HepG2 (cell line): ENCODE measurements at regions of chr6 and their contacts with region 1.

Region 1: DNA sequence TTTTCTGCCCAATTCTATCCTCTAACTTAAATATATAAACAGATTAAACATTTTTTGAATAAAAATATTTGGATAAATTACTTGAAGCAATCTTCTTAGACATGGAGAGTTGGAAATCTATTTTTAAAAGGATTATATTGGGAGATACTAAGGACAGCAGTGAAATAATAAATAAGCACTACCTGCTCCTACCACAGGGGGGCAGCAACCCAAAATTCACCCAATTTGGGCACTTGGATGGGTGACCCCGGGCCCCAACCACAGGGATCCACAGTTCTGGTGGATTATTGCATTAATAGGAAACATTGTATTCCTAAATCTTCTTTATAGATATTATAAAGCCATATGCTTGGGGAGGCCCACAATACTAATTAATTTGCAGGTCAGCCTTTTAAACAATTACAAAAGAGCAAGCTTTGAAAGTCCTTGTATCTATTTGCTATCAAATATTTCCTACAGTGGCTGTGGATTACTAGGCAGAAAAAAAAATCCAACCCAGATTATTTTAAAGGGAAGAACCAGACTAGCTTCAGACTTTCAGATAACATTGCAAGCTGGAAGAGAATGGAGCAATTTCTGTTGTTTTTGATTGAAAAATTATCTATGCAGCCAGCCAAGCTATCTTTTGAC is 66.4 kb upstream of the PDE10A start:
- DNase-seq: peak; percentile 13
- ATAC-seq: peak; percentile 65
- H3K4me3 ChIP-seq: no peak overlapping the region
- H3K27ac ChIP-seq: no peak overlapping the region
- H3K4me1 ChIP-seq: no peaks in the 10 kb centered on the region
- H3K27me3 ChIP-seq: peaks cover 5 to 37% of the 10 kb centered on the region in 2 experiments; a peak in 4 of 5 replicates
- CTCF ChIP-seq: peak; percentile 63
- EP300 ChIP-seq: no peak
- POLR2A ChIP-seq: no peak
- RAD21 ChIP-seq: no peak

Region 2: GRCh38 chr6:165850434-165851019 is 121.1 kb after region 1 on chr6:
- CTCF ChIA-PET with region 1: interaction called, 11 read pairs
- POLR2A ChIA-PET with region 1: no interaction called
- in situ Hi-C with region 1: loop called (anchors 5 kb)
- intact Hi-C with region 1: loop called (anchors 1 kb)
- DNase-seq: peak; percentile 27
- ATAC-seq: peak; percentile 88
- H3K4me3 ChIP-seq: no peak overlapping the region
- H3K27ac ChIP-seq: no peak overlapping the region
- H3K4me1 ChIP-seq: no peaks in the 10 kb centered on the region
- H3K27me3 ChIP-seq: peaks cover 10 to 63% of the 10 kb centered on the region in 2 experiments
- CTCF ChIP-seq: peak; percentile 88
- EP300 ChIP-seq: no peak
- POLR2A ChIP-seq: no peak
- RAD21 ChIP-seq: peak; percentile 73

Region 3: GRCh38 chr6:166106076-166106686 is 376.8 kb after region 1 on chr6:
- CTCF ChIA-PET with region 1: interaction called, 8 read pairs
- POLR2A ChIA-PET with region 1: no interaction called
- in situ Hi-C with region 1: no loop called
- intact Hi-C with region 1: loop called (anchors 2 kb)
- DNase-seq: peak; percentile 50
- ATAC-seq: peak; percentile 91
- H3K4me3 ChIP-seq: no peak overlapping the region
- H3K27ac ChIP-seq: no peak overlapping the region
- H3K4me1 ChIP-seq: no peaks in the 10 kb centered on the region
- H3K27me3 ChIP-seq: peaks cover 0 to 5% of the 10 kb centered on the region in 2 experiments; a peak in 1 of 5 replicates
- CTCF ChIP-seq: peak; percentile 96
- EP300 ChIP-seq: no peak
- POLR2A ChIP-seq: no peak
- RAD21 ChIP-seq: peak; percentile 80